HEK293 (cell line): ENCODE measurements at regions of chr2 and their contacts with region 1.

Region 1: GRCh38 chr2:186641807-186642321 is 52.0 kb upstream of the FAM171B start:
- H3K4me3 ChIP-seq: no peak overlapping the region
- H3K27ac ChIP-seq: no peak overlapping the region
- H3K4me1 ChIP-seq: no peaks in the 10 kb centered on the region
- CTCF ChIP-seq: peak; percentile 62; the same call in 1 of the 2 replicates

Region 2: GRCh38 chr2:186503848-186504606 is 137.8 kb before region 1 on chr2:
- CTCF ChIA-PET with region 1: interaction called, 74 read pairs
- POLR2A ChIA-PET with region 1: no interaction called
- H3K4me3 ChIP-seq: no peak overlapping the region
- H3K27ac ChIP-seq: no peak overlapping the region
- H3K4me1 ChIP-seq: no peaks in the 10 kb centered on the region
- CTCF ChIP-seq: 0 out of 2 replicates have a peak, but pooled peaks have one; percentile 7

Region 3: GRCh38 chr2:186518945-186519344 is 122.9 kb before region 1 on chr2:
- CTCF ChIA-PET with region 1: interaction called, 13 read pairs
- POLR2A ChIA-PET with region 1: no interaction called
- H3K4me3 ChIP-seq: no peak overlapping the region
- H3K27ac ChIP-seq: no peak overlapping the region
- H3K4me1 ChIP-seq: no peaks in the 10 kb centered on the region
- CTCF ChIP-seq: no peak

Region 4: GRCh38 chr2:186530314-186530713 is 111.5 kb before region 1 on chr2:
- CTCF ChIA-PET with region 1: interaction called, 11 read pairs
- POLR2A ChIA-PET with region 1: no interaction called
- H3K4me3 ChIP-seq: no peak overlapping the region
- H3K27ac ChIP-seq: no peak overlapping the region
- H3K4me1 ChIP-seq: no peaks in the 10 kb centered on the region
- CTCF ChIP-seq: no peak

Region 5: DNA sequence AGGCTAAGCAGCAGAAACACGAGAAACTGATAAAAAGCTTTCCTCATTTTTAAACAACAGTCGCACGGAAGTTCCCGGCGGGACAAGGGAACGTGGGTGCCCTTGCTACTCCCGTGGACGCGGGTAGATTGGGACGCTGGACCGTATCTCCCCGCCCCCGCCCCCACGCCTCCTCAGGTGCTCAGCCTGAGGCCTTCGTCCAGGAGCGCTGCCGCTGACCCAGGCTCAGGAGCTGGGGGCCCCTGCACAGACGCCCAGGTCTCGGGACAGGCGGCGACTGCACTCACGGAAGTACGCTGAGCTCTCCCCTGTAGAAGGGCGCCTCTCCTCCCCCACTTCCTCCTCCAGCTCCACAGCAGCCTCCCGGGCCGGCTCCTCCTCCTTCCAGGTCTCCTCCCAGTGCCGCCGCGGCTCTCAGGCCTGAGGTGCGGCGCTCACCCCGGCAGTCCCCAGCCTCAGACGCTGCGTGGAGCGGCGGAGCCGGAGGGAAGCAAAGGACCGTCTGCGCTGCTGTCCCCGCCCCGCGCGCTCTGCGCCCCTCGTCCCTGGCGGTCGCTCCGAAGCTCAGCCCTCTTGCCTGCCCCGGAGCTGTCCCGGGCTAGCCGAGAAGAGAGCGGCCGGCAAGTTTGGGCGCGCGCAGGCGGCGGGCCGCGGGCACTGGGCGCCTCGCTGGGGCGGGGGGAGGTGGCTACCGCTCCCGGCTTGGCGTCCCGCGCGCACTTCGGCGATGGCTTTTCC is 52.1 kb before region 1 on chr2 and contains the start of gene ITGAV:
- CTCF ChIA-PET with region 1: interaction called, 5 read pairs
- POLR2A ChIA-PET with region 1: interaction called, 13 read pairs
- H3K4me3 ChIP-seq: peak within 1 kb of the TSS; percentile 68
- H3K27ac ChIP-seq: peak within 1 kb of the TSS; percentile 93
- H3K4me1 ChIP-seq: 0 out of 2 replicates have a peak, but pooled peaks cover 2% of the 10 kb centered on the region
- CTCF ChIP-seq: peak; percentile 74; the same call in 1 of the 2 replicates